Naive thymus-derived CD4-positive, alpha-beta T cell (primary cell): ENCODE measurements at regions of chr17 and their contacts with region 1.

Region 1: DNA sequence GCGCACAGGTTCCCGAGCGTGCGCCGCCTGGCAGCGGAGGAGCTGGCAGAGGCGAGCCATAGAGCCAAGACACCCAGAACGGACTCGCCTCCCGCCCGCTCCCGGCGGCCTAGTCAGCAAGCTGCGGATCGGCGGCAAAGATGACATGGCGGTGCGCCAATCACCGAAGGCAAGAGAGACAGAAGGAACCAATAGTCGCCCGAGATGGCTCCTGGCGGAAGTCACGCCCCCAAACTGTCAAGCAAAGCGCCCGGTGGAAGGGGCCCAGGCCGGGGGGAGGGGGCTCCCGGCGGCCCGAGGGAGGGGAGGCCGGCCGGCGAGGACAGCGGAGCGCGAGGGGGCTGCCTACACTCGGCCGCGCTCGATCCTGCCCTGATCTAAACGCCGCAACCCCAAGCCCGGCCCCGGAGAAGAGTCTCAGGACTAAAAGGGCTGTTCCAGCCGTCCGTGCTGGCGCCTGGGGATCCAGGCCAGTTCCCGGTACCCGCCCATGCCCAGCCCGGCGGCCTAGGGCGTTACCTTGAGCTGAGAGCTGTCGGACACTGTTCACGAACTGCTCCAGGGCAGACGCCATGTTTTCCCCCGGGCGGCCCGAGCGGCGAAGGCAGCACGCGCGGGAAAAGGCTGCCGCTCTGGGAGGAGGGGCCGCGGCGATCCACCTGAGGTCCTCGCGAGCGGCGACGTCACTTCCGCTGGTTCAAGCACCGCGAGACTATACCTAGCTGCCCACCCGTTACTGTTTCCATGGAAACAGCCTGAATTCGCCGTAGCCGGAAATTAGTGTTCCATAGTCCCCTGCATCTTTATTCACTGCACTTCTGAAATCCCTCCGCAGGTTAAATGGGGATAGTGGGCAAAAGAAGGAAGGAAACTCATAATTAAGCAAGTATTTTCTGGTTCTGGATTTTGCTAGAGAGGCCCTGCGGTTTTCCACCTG is at the start of gene COPS3:
- DNase-seq: peak; percentile 89 to 98 (median 95)
- ATAC-seq: peak; percentile 93
- H3K4me3 ChIP-seq: peak within 1 kb of the TSS; percentile 67
- H3K4me3 Mint-ChIP-seq: peak within 1 kb of the TSS; percentile 87 to 98 (median 94)
- H3K27ac ChIP-seq: peak within 1 kb of the TSS; percentile 95
- H3K27ac Mint-ChIP-seq: peak within 1 kb of the TSS; percentile 91 to 98 (median 94)
- H3K4me1 ChIP-seq: peaks cover 17 to 24% of the 10 kb centered on the region in 2 donors
- H3K4me1 Mint-ChIP-seq: peaks cover 22 to 48% (median 44%) of the 10 kb centered on the region in 7 donors
- H3K27me3 ChIP-seq: no peaks in the 10 kb centered on the region
- H3K27me3 Mint-ChIP-seq: peaks cover 0 to 4% (median 0%) of the 10 kb centered on the region in 5 donors
- total RNA-seq, gene COPS3: 44.7 to 98.7 (median 69.4) TPM

Region 2: GRCh38 chr17:17041571-17042380 is 239.1 kb before region 1 on chr17:
- CTCF ChIA-PET with region 1: interaction called, 3 read pairs
- POLR2A ChIA-PET with region 1: no interaction called
- intact Hi-C with region 1: loop called (anchors 1 kb)
- DNase-seq: peak; percentile 88 to 96 (median 95)
- ATAC-seq: peak; percentile 99
- H3K4me3 ChIP-seq: peak overlapping the region; percentile 73
- H3K4me3 Mint-ChIP-seq: peak overlapping the region; percentile 66 to 94 (median 76)
- H3K27ac ChIP-seq: peak overlapping the region; percentile 61
- H3K27ac Mint-ChIP-seq: peak overlapping the region in 2 of 9 donors; percentile 50 to 71
- H3K4me1 ChIP-seq: peaks cover 35% of the 10 kb centered on the region in 2 donors
- H3K4me1 Mint-ChIP-seq: peaks cover 37 to 47% (median 43%) of the 10 kb centered on the region in 7 donors
- H3K27me3 ChIP-seq: no peaks in the 10 kb centered on the region
- H3K27me3 Mint-ChIP-seq: peaks cover 0 to 4% (median 0%) of the 10 kb centered on the region in 5 donors

Region 3: DNA sequence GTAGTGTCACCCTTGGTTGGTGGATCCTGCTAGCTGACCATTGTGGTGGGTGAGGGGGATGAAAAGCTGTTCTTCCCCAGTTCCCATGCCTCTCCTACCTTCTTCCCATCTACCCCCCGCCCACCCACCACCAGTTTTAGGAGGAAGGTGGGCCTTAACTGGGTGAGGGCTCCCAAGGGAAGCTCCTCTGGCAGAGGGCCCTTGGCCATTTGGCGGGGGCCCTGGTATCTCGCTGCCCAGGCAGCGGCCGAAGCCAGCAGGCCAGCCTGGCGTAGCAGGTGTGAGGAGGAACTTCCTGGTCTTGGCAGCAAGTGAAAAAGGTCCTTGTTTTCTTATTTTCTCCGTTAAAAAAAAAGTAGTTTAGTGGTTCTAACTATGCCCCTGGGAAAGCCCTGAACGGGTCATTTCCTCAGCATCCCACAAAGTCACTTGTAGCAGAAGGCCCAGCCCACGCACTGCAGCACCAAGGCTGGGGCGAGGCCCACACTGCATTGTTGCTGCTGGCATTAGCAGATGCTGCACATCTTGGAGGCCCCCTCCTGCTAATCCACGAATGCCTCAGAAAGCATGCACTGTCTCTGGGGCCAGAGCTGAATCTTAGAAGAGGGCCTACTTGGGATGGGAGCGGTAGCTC is 166.2 kb before region 1 on chr17:
- CTCF ChIA-PET with region 1: no interaction called
- POLR2A ChIA-PET with region 1: no interaction called
- intact Hi-C with region 1: no loop called
- DNase-seq: no peak
- ATAC-seq: no peak
- H3K4me3 ChIP-seq: no peak overlapping the region
- H3K4me3 Mint-ChIP-seq: peak overlapping the region in 3 of 10 donors; percentile 18 to 38 (median 29)
- H3K27ac ChIP-seq: no peak overlapping the region
- H3K27ac Mint-ChIP-seq: peak overlapping the region in 7 of 9 donors; percentile 38 to 88 (median 57)
- H3K4me1 ChIP-seq: peaks cover 39 to 48% of the 10 kb centered on the region in 2 donors
- H3K4me1 Mint-ChIP-seq: peaks cover 55 to 88% (median 80%) of the 10 kb centered on the region in 7 donors
- H3K27me3 ChIP-seq: no peaks in the 10 kb centered on the region
- H3K27me3 Mint-ChIP-seq: no peaks in the 10 kb centered on the region

Region 4: DNA sequence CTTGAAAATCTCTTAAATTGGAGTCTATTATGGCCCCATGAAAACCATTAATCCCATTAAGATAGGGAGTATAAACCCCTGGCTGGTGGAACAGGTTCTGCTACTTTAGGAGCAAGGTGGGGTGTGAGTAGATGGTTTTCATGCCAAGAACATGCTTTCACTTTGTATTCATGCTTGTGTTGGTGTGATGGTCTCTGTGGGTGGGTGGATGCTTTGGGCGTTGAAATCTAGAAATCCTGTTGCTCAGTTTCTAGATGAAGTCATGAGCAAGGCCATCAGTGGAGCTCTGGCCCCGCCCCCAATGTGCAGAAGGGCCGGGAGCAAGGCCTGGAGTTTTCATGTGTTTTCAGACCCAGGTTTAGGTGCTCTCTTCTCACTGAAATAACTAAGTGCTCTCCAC is 94.8 kb before region 1 on chr17:
- CTCF ChIA-PET with region 1: no interaction called
- POLR2A ChIA-PET with region 1: interaction called, 4 read pairs
- intact Hi-C with region 1: loop called (anchors 2 kb)
- DNase-seq: peak in 1 of 9 donors; percentile 70
- ATAC-seq: no peak
- H3K4me3 ChIP-seq: no peak overlapping the region
- H3K4me3 Mint-ChIP-seq: peak overlapping the region in 9 of 10 donors; percentile 18 to 75 (median 55)
- H3K27ac ChIP-seq: no peak overlapping the region
- H3K27ac Mint-ChIP-seq: peak overlapping the region; percentile 71 to 100 (median 98)
- H3K4me1 ChIP-seq: peaks cover 38 to 58% of the 10 kb centered on the region in 2 donors
- H3K4me1 Mint-ChIP-seq: peaks cover 46 to 71% (median 66%) of the 10 kb centered on the region in 7 donors
- H3K27me3 ChIP-seq: no peaks in the 10 kb centered on the region
- H3K27me3 Mint-ChIP-seq: no peaks in the 10 kb centered on the region

Region 5: GRCh38 chr17:17237026-17237799 is 43.7 kb before region 1 on chr17 and contains the start of gene FLCN:
- CTCF ChIA-PET with region 1: no interaction called
- POLR2A ChIA-PET with region 1: interaction called, 8 read pairs
- intact Hi-C with region 1: loop called (anchors 1 kb)
- DNase-seq: peak; percentile 86 to 96 (median 91)
- ATAC-seq: peak; percentile 95
- H3K4me3 ChIP-seq: peak within 1 kb of the TSS; percentile 92
- H3K4me3 Mint-ChIP-seq: peak within 1 kb of the TSS; percentile 90 to 99 (median 96)
- H3K27ac ChIP-seq: peak within 1 kb of the TSS; percentile 97
- H3K27ac Mint-ChIP-seq: peak within 1 kb of the TSS; percentile 97 to 100 (median 98)
- H3K4me1 ChIP-seq: peaks cover 13 to 18% of the 10 kb centered on the region in 2 donors
- H3K4me1 Mint-ChIP-seq: peaks cover 16 to 38% (median 31%) of the 10 kb centered on the region in 7 donors
- H3K27me3 ChIP-seq: no peaks in the 10 kb centered on the region
- H3K27me3 Mint-ChIP-seq: peaks cover 0 to 6% (median 0%) of the 10 kb centered on the region in 5 donors
- total RNA-seq, gene FLCN: 39.4 to 94.7 (median 66.9) TPM

Region 6: GRCh38 chr17:17252149-17252661 is 28.7 kb before region 1 on chr17:
- CTCF ChIA-PET with region 1: no interaction called
- POLR2A ChIA-PET with region 1: no interaction called
- intact Hi-C with region 1: no loop called
- DNase-seq: no peak
- ATAC-seq: no peak
- H3K4me3 ChIP-seq: no peak overlapping the region
- H3K4me3 Mint-ChIP-seq: no peak overlapping the region
- H3K27ac ChIP-seq: no peak overlapping the region
- H3K27ac Mint-ChIP-seq: peak overlapping the region in 1 of 9 donors; percentile 15
- H3K4me1 ChIP-seq: peaks cover 0 to 3% of the 10 kb centered on the region in 2 donors
- H3K4me1 Mint-ChIP-seq: peaks cover 0 to 8% (median 0%) of the 10 kb centered on the region in 7 donors
- H3K27me3 ChIP-seq: no peaks in the 10 kb centered on the region
- H3K27me3 Mint-ChIP-seq: no peaks in the 10 kb centered on the region

Region 7: GRCh38 chr17:17313350-17313991 is 32.6 kb after region 1 on chr17:
- CTCF ChIA-PET with region 1: interaction called, 6 read pairs
- POLR2A ChIA-PET with region 1: interaction called, 5 read pairs
- intact Hi-C with region 1: loop called in 1 of 2 experiments (anchors 1 kb)
- DNase-seq: peak; percentile 49 to 80 (median 76)
- ATAC-seq: peak; percentile 96
- H3K4me3 ChIP-seq: no peak overlapping the region
- H3K4me3 Mint-ChIP-seq: no peak overlapping the region
- H3K27ac ChIP-seq: no peak overlapping the region
- H3K27ac Mint-ChIP-seq: peak overlapping the region in 2 of 9 donors; percentile 28 to 43
- H3K4me1 ChIP-seq: no peaks in the 10 kb centered on the region
- H3K4me1 Mint-ChIP-seq: peaks cover 0 to 7% (median 5%) of the 10 kb centered on the region in 7 donors
- H3K27me3 ChIP-seq: no peaks in the 10 kb centered on the region
- H3K27me3 Mint-ChIP-seq: no peaks in the 10 kb centered on the region

Region 8: DNA sequence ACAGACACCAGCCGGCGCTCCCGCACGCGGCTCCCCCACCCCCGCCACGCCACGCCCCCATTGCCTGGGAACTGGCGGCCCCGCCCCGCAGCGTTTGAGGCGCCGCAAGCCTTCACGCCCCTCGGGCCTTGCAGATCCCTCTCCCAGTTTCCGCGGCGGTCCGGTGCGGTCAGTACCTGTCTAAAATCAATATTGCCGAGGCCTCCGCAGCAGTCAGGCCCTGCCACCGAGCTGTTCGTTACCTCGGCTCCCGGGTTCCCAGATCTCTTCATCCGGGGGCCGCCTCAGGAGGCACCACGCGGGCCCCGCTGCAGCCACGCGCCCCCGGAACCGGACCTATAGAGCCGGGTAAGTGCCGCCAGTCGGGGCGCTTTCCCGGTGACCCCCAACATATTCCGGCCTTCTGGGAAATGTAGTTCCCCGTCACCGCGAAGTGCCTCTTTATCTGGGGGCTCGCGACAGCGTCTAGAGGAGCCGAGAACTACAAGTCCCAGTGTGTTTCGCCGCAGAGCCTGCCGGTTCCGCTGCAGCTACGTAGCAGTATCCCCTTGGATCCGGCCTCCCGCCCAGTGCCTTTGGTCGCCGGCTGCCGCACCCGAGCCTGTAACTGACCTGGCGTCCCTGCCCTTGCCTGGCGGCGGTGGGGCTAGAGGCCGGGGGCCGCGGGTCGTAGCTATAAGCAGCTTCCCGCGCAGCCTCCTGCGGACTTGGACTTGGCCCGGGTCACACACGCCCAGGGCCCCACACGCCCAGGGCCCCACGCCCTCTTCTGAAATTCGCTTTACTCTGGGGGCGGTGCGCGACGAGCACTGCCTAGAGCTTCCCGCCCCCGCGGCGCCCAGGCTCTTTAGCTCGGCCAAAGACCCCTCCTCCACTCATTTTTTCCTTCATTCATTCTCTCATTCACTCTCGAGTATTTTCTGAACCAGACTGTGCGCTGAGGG is 310.7 kb after region 1 on chr17 and contains the start of gene PEMT:
- CTCF ChIA-PET with region 1: no interaction called
- POLR2A ChIA-PET with region 1: no interaction called
- intact Hi-C with region 1: loop called in 1 of 2 experiments (anchors 1 kb)
- DNase-seq: peak; percentile 78 to 96 (median 93)
- ATAC-seq: peak; percentile 95
- H3K4me3 ChIP-seq: peak within 1 kb of the TSS; percentile 93
- H3K4me3 Mint-ChIP-seq: peak within 1 kb of the TSS; percentile 87 to 99 (median 93)
- H3K27ac ChIP-seq: peak within 1 kb of the TSS; percentile 79
- H3K27ac Mint-ChIP-seq: peak within 1 kb of the TSS; percentile 86 to 100 (median 93)
- H3K4me1 ChIP-seq: peaks cover 16 to 18% of the 10 kb centered on the region in 2 donors
- H3K4me1 Mint-ChIP-seq: peaks cover 14 to 32% (median 19%) of the 10 kb centered on the region in 7 donors
- H3K27me3 ChIP-seq: no peaks in the 10 kb centered on the region
- H3K27me3 Mint-ChIP-seq: no peaks in the 10 kb centered on the region
- total RNA-seq, gene PEMT: 9.5 to 15.0 (median 12.1) TPM

Region 9: GRCh38 chr17:18260332-18261144 is 979.7 kb after region 1 on chr17 and contains the start of gene MIEF2:
- CTCF ChIA-PET with region 1: no interaction called
- POLR2A ChIA-PET with region 1: no interaction called
- intact Hi-C with region 1: loop called in 1 of 2 experiments (anchors 2 kb)
- DNase-seq: peak; percentile 80 to 92 (median 91)
- ATAC-seq: peak; percentile 91
- H3K4me3 ChIP-seq: peak within 1 kb of the TSS; percentile 84
- H3K4me3 Mint-ChIP-seq: peak within 1 kb of the TSS; percentile 78 to 96 (median 84)
- H3K27ac ChIP-seq: peak within 1 kb of the TSS; percentile 95
- H3K27ac Mint-ChIP-seq: peak within 1 kb of the TSS; percentile 77 to 92 (median 84)
- H3K4me1 ChIP-seq: peaks cover 29 to 47% of the 10 kb centered on the region in 2 donors
- H3K4me1 Mint-ChIP-seq: peaks cover 11 to 57% (median 37%) of the 10 kb centered on the region in 7 donors
- H3K27me3 ChIP-seq: no peaks in the 10 kb centered on the region
- H3K27me3 Mint-ChIP-seq: no peaks in the 10 kb centered on the region
- total RNA-seq, gene MIEF2: 6.5 to 22.5 (median 15.1) TPM